A673 (cell line): ENCODE measurements at regions of chr15 and their contacts with region 1.

Region 1: DNA sequence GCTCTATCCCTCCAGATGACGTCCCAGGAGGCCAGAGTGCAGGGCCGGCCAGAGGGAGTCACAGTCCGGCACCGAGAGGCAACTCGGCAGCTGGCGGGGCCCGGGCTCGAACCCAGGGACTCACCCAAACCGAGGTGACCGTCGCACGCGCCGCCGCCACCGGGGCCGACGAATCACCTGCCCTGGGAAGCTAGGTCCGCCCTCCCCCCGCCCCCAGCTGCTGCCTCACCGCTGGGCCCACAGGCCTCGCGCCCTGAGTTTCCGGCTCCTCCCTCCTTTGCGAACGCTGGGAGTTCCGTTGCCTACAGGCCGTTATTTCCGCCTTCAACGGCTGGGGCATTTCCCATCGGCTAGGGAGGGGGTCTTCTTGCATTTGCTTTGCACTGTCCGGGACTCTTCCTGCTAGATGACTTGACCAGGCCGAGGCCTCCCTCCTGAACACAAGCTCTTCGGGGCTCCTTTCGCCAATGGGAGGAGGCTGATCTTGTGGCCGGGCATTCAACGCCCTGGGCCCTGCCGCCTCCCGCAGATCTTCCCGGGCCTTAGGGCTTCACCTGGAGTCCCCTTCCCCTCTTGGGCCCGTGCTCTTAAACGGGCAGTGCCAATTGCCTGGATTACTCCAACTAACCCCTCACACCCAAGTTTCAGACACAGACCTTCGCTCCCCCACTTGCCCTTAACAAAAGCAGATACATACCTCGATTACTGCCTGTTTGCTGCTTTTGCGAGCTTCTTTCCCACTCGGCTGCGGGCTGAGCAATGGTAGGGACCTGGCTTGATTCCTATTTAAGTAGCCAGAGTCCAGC is at the start of gene SNUPN:
- DNase-seq: peak; percentile 98
- H3K4me3 ChIP-seq: peak within 1 kb of the TSS; percentile 98
- H3K27ac ChIP-seq: peak within 1 kb of the TSS; percentile 99
- H3K4me1 ChIP-seq: peaks cover 16% of the 10 kb centered on the region
- H3K27me3 ChIP-seq: no peaks in the 10 kb centered on the region
- CTCF ChIP-seq: no peak
- total RNA-seq, gene SNUPN: 32.8 and 34.6 TPM in 2 replicates

Region 2: GRCh38 chr15:75153087-75153486 is 472.7 kb before region 1 on chr15:
- CTCF ChIA-PET with region 1: no interaction called
- POLR2A ChIA-PET with region 1: no interaction called
- intact Hi-C with region 1: no loop called
- DNase-seq: peak; percentile 48
- H3K4me3 ChIP-seq: no peak overlapping the region
- H3K27ac ChIP-seq: no peak overlapping the region
- H3K4me1 ChIP-seq: no peaks in the 10 kb centered on the region
- H3K27me3 ChIP-seq: no peaks in the 10 kb centered on the region
- CTCF ChIP-seq: no peak

Region 3: GRCh38 chr15:75578948-75579920 is 46.5 kb before region 1 on chr15 and contains the start of gene PTPN9:
- CTCF ChIA-PET with region 1: interaction called, 14 read pairs
- POLR2A ChIA-PET with region 1: no interaction called
- intact Hi-C with region 1: no loop called
- DNase-seq: peak; percentile 94
- H3K4me3 ChIP-seq: peak within 1 kb of the TSS; percentile 85
- H3K27ac ChIP-seq: peak within 1 kb of the TSS; percentile 97
- H3K4me1 ChIP-seq: peaks cover 12% of the 10 kb centered on the region
- H3K27me3 ChIP-seq: no peaks in the 10 kb centered on the region
- CTCF ChIP-seq: peak; percentile 55
- total RNA-seq, gene PTPN9: 60.9 and 64.9 TPM in 2 replicates

Region 4: GRCh38 chr15:75639709-75640482 is 14.2 kb after region 1 on chr15 and contains the start of gene IMP3:
- CTCF ChIA-PET with region 1: interaction called, 14 read pairs
- POLR2A ChIA-PET with region 1: interaction called, 14 read pairs
- intact Hi-C with region 1: no loop called
- DNase-seq: peak; percentile 99
- H3K4me3 ChIP-seq: peak within 1 kb of the TSS; percentile 75
- H3K27ac ChIP-seq: peak within 1 kb of the TSS; percentile 88
- H3K4me1 ChIP-seq: peaks cover 15% of the 10 kb centered on the region
- H3K27me3 ChIP-seq: no peaks in the 10 kb centered on the region
- CTCF ChIP-seq: no peak
- total RNA-seq, gene IMP3: 76.5 and 84.5 TPM in 2 replicates